CD4-positive, alpha-beta memory T cell (primary cell): ENCODE measurements at regions of chr4 and their contacts with region 1.

Region 1: GRCh38 chr4:113547487-113548042 is 214.0 kb downstream of the CAMK2D start:
- DNase-seq: peak; percentile 86 to 94 (median 89)
- H3K4me3 ChIP-seq: no peak overlapping the region
- H3K4me3 Mint-ChIP-seq: peak overlapping the region in 1 of 8 donors; percentile 20
- H3K27ac ChIP-seq: no peak overlapping the region
- H3K27ac Mint-ChIP-seq: peak overlapping the region; percentile 0 to 81 (median 50)
- H3K4me1 ChIP-seq: peaks cover 11% of the 10 kb centered on the region
- H3K4me1 Mint-ChIP-seq: peaks cover 9 to 20% (median 10%) of the 10 kb centered on the region in 4 donors
- H3K27me3 ChIP-seq: no peaks in the 10 kb centered on the region
- H3K27me3 Mint-ChIP-seq: no peaks in the 10 kb centered on the region

Region 2: GRCh38 chr4:113534711-113535110 is 12.9 kb before region 1 on chr4:
- CTCF ChIA-PET with region 1: interaction called, 14 read pairs
- POLR2A ChIA-PET with region 1: no interaction called
- intact Hi-C with region 1: no loop called
- DNase-seq: no peak
- H3K4me3 ChIP-seq: no peak overlapping the region
- H3K4me3 Mint-ChIP-seq: no peak overlapping the region
- H3K27ac ChIP-seq: no peak overlapping the region
- H3K27ac Mint-ChIP-seq: no peak overlapping the region
- H3K4me1 ChIP-seq: no peaks in the 10 kb centered on the region
- H3K4me1 Mint-ChIP-seq: no peaks in the 10 kb centered on the region
- H3K27me3 ChIP-seq: no peaks in the 10 kb centered on the region
- H3K27me3 Mint-ChIP-seq: no peaks in the 10 kb centered on the region

Region 3: GRCh38 chr4:113604955-113605354 is 57.4 kb after region 1 on chr4:
- CTCF ChIA-PET with region 1: interaction called, 7 read pairs
- POLR2A ChIA-PET with region 1: no interaction called
- intact Hi-C with region 1: loop called (anchors 2 kb)
- DNase-seq: no peak
- H3K4me3 ChIP-seq: no peak overlapping the region
- H3K4me3 Mint-ChIP-seq: no peak overlapping the region
- H3K27ac ChIP-seq: no peak overlapping the region
- H3K27ac Mint-ChIP-seq: no peak overlapping the region
- H3K4me1 ChIP-seq: no peaks in the 10 kb centered on the region
- H3K4me1 Mint-ChIP-seq: peaks cover 0 to 8% (median 3%) of the 10 kb centered on the region in 4 donors
- H3K27me3 ChIP-seq: no peaks in the 10 kb centered on the region
- H3K27me3 Mint-ChIP-seq: no peaks in the 10 kb centered on the region

Region 4: DNA sequence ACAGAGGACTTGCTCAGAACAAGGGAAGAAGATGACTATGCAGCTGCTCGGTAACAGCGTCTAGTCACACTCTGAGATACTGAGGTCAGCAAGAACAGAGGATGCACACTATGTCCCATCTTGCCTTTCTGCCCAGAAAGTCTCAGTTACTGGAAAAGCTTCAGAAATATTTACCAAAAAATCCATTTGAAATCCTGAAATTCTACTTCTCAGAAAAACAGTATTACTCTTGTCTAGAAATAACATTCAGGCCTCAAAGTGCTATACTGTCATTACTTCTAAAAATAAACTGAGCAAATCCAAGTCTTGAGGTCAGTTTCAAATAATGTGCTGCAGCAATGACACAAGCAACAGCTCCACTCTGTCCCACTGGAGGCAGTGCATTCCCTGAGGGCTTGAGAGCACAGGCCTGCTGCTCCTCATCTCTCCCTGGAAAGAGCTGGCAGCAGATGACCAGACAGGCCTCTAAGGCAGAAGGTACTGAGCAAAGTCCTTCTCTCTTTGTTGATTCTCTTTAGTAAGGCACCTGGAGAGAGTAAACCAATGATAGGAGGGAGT is 137.0 kb after region 1 on chr4:
- CTCF ChIA-PET with region 1: interaction called, 3 read pairs
- POLR2A ChIA-PET with region 1: no interaction called
- intact Hi-C with region 1: loop called (anchors 5 kb)
- DNase-seq: no peak
- H3K4me3 ChIP-seq: no peak overlapping the region
- H3K4me3 Mint-ChIP-seq: peak overlapping the region in 4 of 8 donors; percentile 12 to 82 (median 50)
- H3K27ac ChIP-seq: no peak overlapping the region
- H3K27ac Mint-ChIP-seq: peak overlapping the region in 6 of 7 donors; percentile 48 to 96 (median 83)
- H3K4me1 ChIP-seq: peaks cover 40% of the 10 kb centered on the region
- H3K4me1 Mint-ChIP-seq: peaks cover 42 to 54% (median 47%) of the 10 kb centered on the region in 4 donors
- H3K27me3 ChIP-seq: no peaks in the 10 kb centered on the region
- H3K27me3 Mint-ChIP-seq: no peaks in the 10 kb centered on the region

Region 5: GRCh38 chr4:113901994-113902787 is 354.6 kb after region 1 on chr4:
- CTCF ChIA-PET with region 1: interaction called, 15 read pairs
- POLR2A ChIA-PET with region 1: interaction called, 3 read pairs
- intact Hi-C with region 1: no loop called
- DNase-seq: peak; percentile 81 to 87 (median 85)
- H3K4me3 ChIP-seq: peak overlapping the region; percentile 19 to 33
- H3K4me3 Mint-ChIP-seq: peak overlapping the region; percentile 67 to 89 (median 78)
- H3K27ac ChIP-seq: peak overlapping the region; percentile 45
- H3K27ac Mint-ChIP-seq: peak overlapping the region; percentile 69 to 98 (median 89)
- H3K4me1 ChIP-seq: peaks cover 94% of the 10 kb centered on the region
- H3K4me1 Mint-ChIP-seq: peaks cover 49 to 77% (median 66%) of the 10 kb centered on the region in 4 donors
- H3K27me3 ChIP-seq: no peaks in the 10 kb centered on the region
- H3K27me3 Mint-ChIP-seq: no peaks in the 10 kb centered on the region

Region 6: GRCh38 chr4:114072781-114073180 is 525.2 kb after region 1 on chr4:
- CTCF ChIA-PET with region 1: interaction called, 8 read pairs
- POLR2A ChIA-PET with region 1: no interaction called
- intact Hi-C with region 1: loop called (anchors 1 kb)
- DNase-seq: no peak
- H3K4me3 ChIP-seq: no peak overlapping the region
- H3K4me3 Mint-ChIP-seq: no peak overlapping the region
- H3K27ac ChIP-seq: no peak overlapping the region
- H3K27ac Mint-ChIP-seq: no peak overlapping the region
- H3K4me1 ChIP-seq: no peaks in the 10 kb centered on the region
- H3K4me1 Mint-ChIP-seq: peaks cover 0 to 5% (median 3%) of the 10 kb centered on the region in 4 donors
- H3K27me3 ChIP-seq: no peaks in the 10 kb centered on the region
- H3K27me3 Mint-ChIP-seq: peaks cover 0 to 1% of the 10 kb centered on the region in 2 donors

Region 7: GRCh38 chr4:114694770-114695169 is 1147.2 kb after region 1 on chr4:
- CTCF ChIA-PET with region 1: no interaction called
- POLR2A ChIA-PET with region 1: no interaction called
- intact Hi-C with region 1: loop called (anchors 2 kb)
- DNase-seq: peak in 4 of 5 donors; percentile 6 to 19 (median 12)
- H3K4me3 ChIP-seq: no peak overlapping the region
- H3K4me3 Mint-ChIP-seq: no peak overlapping the region
- H3K27ac ChIP-seq: no peak overlapping the region
- H3K27ac Mint-ChIP-seq: no peak overlapping the region
- H3K4me1 ChIP-seq: no peaks in the 10 kb centered on the region
- H3K4me1 Mint-ChIP-seq: no peaks in the 10 kb centered on the region
- H3K27me3 ChIP-seq: peaks cover 3% of the 10 kb centered on the region
- H3K27me3 Mint-ChIP-seq: peaks cover 3 to 4% of the 10 kb centered on the region in 2 donors